AG04450 (cell line): ENCODE measurements at regions of chr16 and their contacts with region 1.

Region 1: GRCh38 chr16:4330277-4330874 is 14.5 kb downstream of the GLIS2 start:
- DNase-seq: no peak
- H3K4me3 ChIP-seq: no peak overlapping the region
- H3K27ac ChIP-seq: no peak overlapping the region
- H3K27me3 ChIP-seq: no peaks in the 10 kb centered on the region
- CTCF ChIP-seq: peak; percentile 98

Region 2: GRCh38 chr16:4200000-4200780 is 130.2 kb before region 1 on chr16:
- CTCF ChIA-PET with region 1: interaction called, 11 read pairs
- POLR2A ChIA-PET with region 1: interaction called, 3 read pairs
- DNase-seq: peak; percentile 36
- H3K4me3 ChIP-seq: no peak overlapping the region
- H3K27ac ChIP-seq: no peak overlapping the region
- H3K27me3 ChIP-seq: no peaks in the 10 kb centered on the region
- CTCF ChIP-seq: peak; percentile 88

Region 3: DNA sequence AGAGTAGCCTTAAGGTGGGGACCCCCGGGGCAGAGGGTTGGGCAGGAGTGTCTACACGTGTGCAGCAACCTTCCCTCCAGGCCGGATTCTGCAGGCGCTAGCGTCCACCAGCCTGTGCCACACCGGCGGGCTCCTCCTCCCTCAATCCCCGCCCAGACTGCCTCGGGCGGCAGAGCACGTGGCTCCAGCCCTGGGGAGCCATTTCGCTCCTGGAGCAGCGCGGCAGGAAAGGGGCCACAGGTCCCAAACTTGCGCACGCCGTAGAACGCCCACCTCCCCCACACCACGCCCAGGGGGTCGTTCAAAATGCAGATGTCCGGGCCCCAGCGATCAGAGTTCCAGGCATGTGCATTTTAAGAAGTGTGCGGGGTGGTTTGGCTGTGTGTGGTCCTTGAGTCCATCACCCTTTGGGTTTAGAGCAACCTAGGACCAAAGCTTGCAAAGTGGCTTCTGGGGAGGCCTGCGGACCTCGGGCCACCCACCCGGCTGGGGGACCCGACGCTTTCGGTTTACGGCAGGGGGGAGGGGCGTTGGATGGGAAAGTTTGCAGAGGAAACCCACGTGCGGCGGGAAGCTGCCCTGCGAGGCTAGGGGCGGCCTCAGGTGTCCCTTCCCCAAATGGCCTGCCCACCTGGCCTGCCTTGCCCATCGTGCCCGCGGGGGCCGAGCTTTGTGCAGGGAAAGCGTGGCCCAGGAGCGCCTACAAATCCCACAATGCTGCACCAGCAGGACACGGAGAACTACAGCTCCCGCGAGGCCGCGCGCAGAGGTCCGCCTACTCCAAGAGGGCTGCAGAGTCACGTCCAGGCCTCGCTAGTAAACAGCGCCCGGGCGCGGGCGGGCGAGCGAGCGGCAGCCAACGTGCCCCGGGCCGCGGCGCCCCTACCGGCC is 59.0 kb before region 1 on chr16:
- CTCF ChIA-PET with region 1: interaction called, 6 read pairs
- POLR2A ChIA-PET with region 1: interaction called, 11 read pairs
- DNase-seq: peak; percentile 76
- H3K4me3 ChIP-seq: peak overlapping the region; percentile 84
- H3K27ac ChIP-seq: peak overlapping the region; percentile 70
- H3K27me3 ChIP-seq: no peaks in the 10 kb centered on the region
- CTCF ChIP-seq: no peak

Region 4: GRCh38 chr16:4288148-4288921 is 42.0 kb before region 1 on chr16:
- CTCF ChIA-PET with region 1: interaction called, 15 read pairs
- POLR2A ChIA-PET with region 1: interaction called, 3 read pairs
- DNase-seq: no peak
- H3K4me3 ChIP-seq: no peak overlapping the region
- H3K27ac ChIP-seq: no peak overlapping the region
- H3K27me3 ChIP-seq: no peaks in the 10 kb centered on the region
- CTCF ChIP-seq: peak; percentile 92

Region 5: GRCh38 chr16:4307215-4308037 is 22.9 kb before region 1 on chr16:
- CTCF ChIA-PET with region 1: interaction called, 37 read pairs
- POLR2A ChIA-PET with region 1: interaction called, 3 read pairs
- DNase-seq: peak; percentile 88
- H3K4me3 ChIP-seq: peak overlapping the region; percentile 68
- H3K27ac ChIP-seq: peak overlapping the region; percentile 65
- H3K27me3 ChIP-seq: no peaks in the 10 kb centered on the region
- CTCF ChIP-seq: no peak

Region 6: GRCh38 chr16:4561596-4561995 is 231.2 kb after region 1 on chr16:
- CTCF ChIA-PET with region 1: no interaction called
- POLR2A ChIA-PET with region 1: no interaction called
- DNase-seq: no peak
- H3K4me3 ChIP-seq: no peak overlapping the region
- H3K27ac ChIP-seq: no peak overlapping the region
- H3K27me3 ChIP-seq: peaks cover 28% of the 10 kb centered on the region
- CTCF ChIP-seq: no peak